K562 (cell line): ENCODE measurements at regions of chr6 and their contacts with region 1.

Region 1: DNA sequence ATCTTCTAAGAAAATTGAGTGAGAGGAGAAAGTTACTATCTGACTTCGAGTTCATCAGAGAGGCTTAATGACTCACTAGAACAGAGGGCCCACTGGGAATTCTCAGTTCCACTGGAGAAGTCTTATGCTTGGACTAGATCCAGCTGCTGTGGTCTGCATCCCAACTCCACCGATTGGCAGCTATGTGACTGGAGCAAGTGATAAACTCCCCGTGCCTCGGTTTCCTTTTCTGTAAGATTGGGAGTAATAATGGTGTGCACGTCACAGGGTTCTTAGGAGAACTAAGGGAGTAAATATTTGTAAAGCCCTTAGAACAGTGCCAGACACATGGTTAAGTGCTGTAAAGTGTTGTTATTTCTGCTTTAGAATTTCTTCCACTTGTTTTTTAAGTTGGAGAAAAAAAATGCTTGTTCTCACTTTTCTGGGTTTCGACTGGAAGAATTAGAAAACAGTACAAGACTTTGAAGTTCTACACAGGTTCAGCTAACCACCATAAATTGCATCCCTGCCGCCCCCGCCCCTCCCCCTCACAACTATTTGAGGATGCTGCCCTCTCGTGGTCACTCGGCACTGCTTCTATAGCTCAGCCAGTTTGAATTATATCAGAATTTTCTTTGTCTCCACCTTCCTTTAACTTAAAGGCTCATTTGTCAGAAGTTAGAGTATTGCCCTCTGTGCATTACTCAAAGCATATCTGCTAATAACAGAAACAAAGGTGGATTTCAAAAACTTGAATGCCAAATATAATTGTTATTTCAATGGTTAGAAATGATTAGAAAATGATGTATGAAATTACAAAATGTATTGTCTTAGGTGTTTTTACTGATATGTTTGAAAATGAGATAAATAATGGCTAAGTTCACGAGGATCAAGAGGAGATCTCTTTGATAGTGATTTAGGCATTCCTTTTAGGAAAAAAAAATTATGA is 95.0 kb upstream of the IFNGR1 start:
- DNase-seq: peak; percentile 73 to 82 (median 80)
- ATAC-seq: peak; percentile 98
- H3K4me3 ChIP-seq: no peak overlapping the region
- H3K27ac ChIP-seq: no peak overlapping the region
- H3K4me1 ChIP-seq: 0 out of 5 replicates have a peak, but pooled peaks cover 0 to 6% of the 10 kb centered on the region in 2 experiments
- H3K27me3 ChIP-seq: peaks cover 0 to 4% of the 10 kb centered on the region in 2 experiments; a peak in 1 of 5 replicates
- CTCF ChIP-seq: peak; percentile 85 to 95 (median 89)
- EP300 ChIP-seq: no peak
- POLR2A ChIP-seq: no peak
- RAD21 ChIP-seq: peak; percentile 95 to 98

Region 2: DNA sequence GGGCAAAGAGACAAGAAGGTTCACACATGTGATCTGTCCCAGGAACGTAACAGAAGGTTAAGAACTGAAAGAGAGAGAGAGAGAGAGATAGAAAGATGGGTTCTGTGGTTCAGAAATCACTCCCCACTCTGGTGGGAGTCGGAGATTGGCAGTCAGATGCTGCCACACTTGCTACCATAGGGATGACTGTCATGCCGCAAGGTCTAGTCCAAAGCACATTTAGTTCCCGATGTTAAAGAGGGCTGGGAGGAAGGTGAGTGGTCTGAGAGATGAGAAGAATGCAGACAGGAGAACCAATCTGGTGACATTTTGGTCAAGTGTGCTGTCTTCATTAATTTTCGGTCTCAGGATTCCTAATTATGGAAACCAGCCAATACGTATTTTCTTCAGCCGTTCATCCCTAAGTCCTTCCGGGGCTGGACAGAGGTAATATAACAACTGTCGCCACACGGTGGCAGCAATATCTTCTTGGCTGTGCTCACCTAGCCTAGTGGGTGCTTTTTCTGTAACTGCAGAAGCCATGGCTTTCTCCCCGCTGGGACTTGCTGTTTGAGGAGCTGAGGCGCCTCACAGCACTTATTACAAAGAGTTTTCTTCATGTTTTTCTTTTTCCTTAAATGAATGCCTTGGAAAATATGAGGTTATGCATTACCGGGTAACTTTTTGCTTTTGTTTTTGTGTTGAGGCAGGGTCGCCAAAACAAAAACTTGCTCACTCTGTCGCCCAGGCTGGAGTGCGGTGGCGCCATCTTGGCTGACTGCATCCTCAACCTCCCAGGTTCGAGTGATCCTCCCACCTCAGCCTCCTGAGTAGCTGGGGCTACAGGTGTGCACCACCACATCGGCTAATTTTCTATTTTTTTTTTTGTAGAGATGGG is 346.1 kb before region 1 on chr6:
- CTCF ChIA-PET with region 1: no interaction called
- POLR2A ChIA-PET with region 1: no interaction called
- in situ Hi-C with region 1: no loop called
- intact Hi-C with region 1: loop called (anchors 5 kb)
- DNase-seq: peak; percentile 83 to 86 (median 84)
- ATAC-seq: peak; percentile 99
- H3K4me3 ChIP-seq: no peak overlapping the region
- H3K27ac ChIP-seq: no peak overlapping the region
- H3K4me1 ChIP-seq: no peaks in the 10 kb centered on the region; a peak in 2 of 5 replicates
- H3K27me3 ChIP-seq: peaks cover 5 to 21% of the 10 kb centered on the region in 2 experiments; a peak in 4 of 5 replicates
- CTCF ChIP-seq: peak; percentile 84 to 86 (median 85)
- EP300 ChIP-seq: no peak
- POLR2A ChIP-seq: no peak
- RAD21 ChIP-seq: peak; percentile 68 to 80

Region 3: DNA sequence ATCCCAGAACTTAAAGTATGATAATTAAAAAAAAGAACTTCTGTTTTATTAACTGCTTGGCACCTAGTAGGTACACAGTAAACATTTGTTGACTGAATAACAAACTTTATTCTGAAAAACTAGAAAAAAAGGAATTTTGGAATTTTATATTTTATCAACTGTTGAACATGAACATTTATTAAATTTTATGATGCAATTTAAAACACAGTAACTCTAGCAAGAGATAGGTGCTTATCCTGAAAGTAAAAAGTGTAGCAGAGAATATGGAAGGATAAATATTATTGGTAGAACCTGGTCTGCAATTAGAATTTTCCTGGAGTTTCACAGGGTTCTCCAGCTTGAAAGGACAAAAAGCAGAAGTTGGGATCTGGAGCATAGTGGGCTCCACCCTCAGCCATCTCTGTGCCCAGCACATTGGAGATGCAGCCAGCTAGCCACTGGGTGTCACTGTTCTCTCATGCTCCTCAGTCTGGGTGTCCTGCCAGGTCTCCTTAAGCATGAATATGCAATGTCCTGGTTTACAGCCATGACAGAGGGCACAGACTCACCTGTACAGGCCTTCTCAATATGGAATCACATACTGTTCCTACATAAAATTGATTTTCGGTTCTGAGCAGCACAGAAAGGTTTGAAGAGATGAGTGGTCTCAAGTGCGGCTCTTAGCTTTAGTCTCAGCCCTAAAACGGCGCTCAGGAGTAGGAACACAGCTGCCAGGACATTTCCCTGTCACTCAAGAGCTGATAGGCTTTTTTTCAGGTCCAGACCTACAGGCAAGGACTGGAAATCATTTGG is 237.7 kb before region 1 on chr6:
- CTCF ChIA-PET with region 1: interaction called, 6 read pairs
- POLR2A ChIA-PET with region 1: no interaction called
- in situ Hi-C with region 1: no loop called
- intact Hi-C with region 1: loop called (anchors 1 kb)
- DNase-seq: peak; percentile 49 to 82 (median 58)
- ATAC-seq: peak; percentile 100
- H3K4me3 ChIP-seq: no peak overlapping the region
- H3K27ac ChIP-seq: no peak overlapping the region
- H3K4me1 ChIP-seq: no peaks in the 10 kb centered on the region
- H3K27me3 ChIP-seq: 0 out of 5 replicates have a peak, but pooled peaks cover 4% of the 10 kb centered on the region in 2 experiments
- CTCF ChIP-seq: peak; percentile 91 to 96 (median 94)
- EP300 ChIP-seq: no peak
- POLR2A ChIP-seq: no peak
- RAD21 ChIP-seq: peak; percentile 96 to 98

Region 4: DNA sequence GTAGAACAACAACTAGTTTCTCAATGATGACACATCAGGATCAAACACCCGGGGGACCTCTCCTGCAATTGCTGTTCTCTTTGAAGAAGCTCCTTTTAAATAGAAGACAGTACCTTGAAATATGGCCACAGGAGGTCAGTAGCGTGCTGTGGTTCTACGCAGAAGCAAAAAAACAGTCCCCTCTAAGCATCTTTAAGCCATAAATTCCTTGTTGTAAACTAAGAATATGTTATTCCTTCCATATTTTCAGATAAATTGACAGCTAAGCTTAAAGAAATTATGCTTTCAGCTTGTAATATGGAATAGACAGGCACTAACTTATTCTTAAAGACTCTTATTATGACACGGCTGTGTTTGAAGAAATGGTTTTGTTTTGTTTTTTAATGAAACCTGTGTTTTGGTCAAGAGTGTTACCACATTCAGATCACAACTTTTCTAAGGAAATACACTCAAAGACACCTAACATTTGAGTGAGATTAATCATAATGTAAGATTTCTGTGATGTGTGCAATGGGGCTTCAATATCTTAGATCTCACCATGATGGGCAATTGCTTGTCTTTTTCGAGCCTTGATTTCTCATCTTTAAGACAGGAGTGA is 219.7 kb before region 1 on chr6:
- CTCF ChIA-PET with region 1: interaction called, 23 read pairs
- POLR2A ChIA-PET with region 1: no interaction called
- in situ Hi-C with region 1: loop called (anchors 5 kb)
- intact Hi-C with region 1: loop called (anchors 1 kb)
- DNase-seq: peak; percentile 50 to 76 (median 64)
- ATAC-seq: peak; percentile 90
- H3K4me3 ChIP-seq: no peak overlapping the region
- H3K27ac ChIP-seq: no peak overlapping the region
- H3K4me1 ChIP-seq: no peaks in the 10 kb centered on the region
- H3K27me3 ChIP-seq: peaks cover 0 to 8% of the 10 kb centered on the region in 2 experiments; a peak in 1 of 5 replicates
- CTCF ChIP-seq: peak; percentile 68 to 91 (median 72)
- EP300 ChIP-seq: no peak
- POLR2A ChIP-seq: no peak
- RAD21 ChIP-seq: peak; percentile 97 to 98

Region 5: GRCh38 chr6:137155830-137156229 is 158.4 kb before region 1 on chr6:
- CTCF ChIA-PET with region 1: no interaction called
- POLR2A ChIA-PET with region 1: no interaction called
- in situ Hi-C with region 1: no loop called
- intact Hi-C with region 1: loop called (anchors 2 kb)
- DNase-seq: peak in 1 of 4 experiments; percentile 31
- ATAC-seq: no peak
- H3K4me3 ChIP-seq: no peak overlapping the region
- H3K27ac ChIP-seq: no peak overlapping the region
- H3K4me1 ChIP-seq: peaks cover 0 to 15% of the 10 kb centered on the region in 2 experiments; a peak in 3 of 5 replicates
- H3K27me3 ChIP-seq: no peaks in the 10 kb centered on the region
- CTCF ChIP-seq: no peak
- EP300 ChIP-seq: no peak; the same call in 1 of the 2 replicates
- POLR2A ChIP-seq: no peak
- RAD21 ChIP-seq: peak; percentile 45 to 52; a peak in 3 of 4 replicates

Region 6: GRCh38 chr6:137165375-137166246 is 148.6 kb before region 1 on chr6:
- CTCF ChIA-PET with region 1: no interaction called
- POLR2A ChIA-PET with region 1: interaction called, 3 read pairs
- in situ Hi-C with region 1: no loop called
- intact Hi-C with region 1: loop called (anchors 1 kb)
- DNase-seq: peak in 3 of 4 experiments; percentile 28 to 76 (median 45)
- ATAC-seq: peak; percentile 78
- H3K4me3 ChIP-seq: no peak overlapping the region
- H3K27ac ChIP-seq: no peak overlapping the region
- H3K4me1 ChIP-seq: peaks cover 0 to 34% of the 10 kb centered on the region in 2 experiments; a peak in 4 of 5 replicates
- H3K27me3 ChIP-seq: no peaks in the 10 kb centered on the region
- CTCF ChIP-seq: peak; percentile 71 to 75 (median 73)
- EP300 ChIP-seq: no peak
- POLR2A ChIP-seq: no peak
- RAD21 ChIP-seq: peak; percentile 82 to 88; a peak in 3 of 4 replicates

Region 7: GRCh38 chr6:137641474-137642077 is 327.4 kb after region 1 on chr6:
- CTCF ChIA-PET with region 1: interaction called, 3 read pairs
- POLR2A ChIA-PET with region 1: no interaction called
- in situ Hi-C with region 1: no loop called
- intact Hi-C with region 1: loop called (anchors 2 kb)
- DNase-seq: peak; percentile 45 to 76 (median 58)
- ATAC-seq: peak; percentile 98
- H3K4me3 ChIP-seq: no peak overlapping the region
- H3K27ac ChIP-seq: no peak overlapping the region
- H3K4me1 ChIP-seq: no peaks in the 10 kb centered on the region
- H3K27me3 ChIP-seq: peaks cover 9 to 10% of the 10 kb centered on the region in 2 experiments; a peak in 3 of 5 replicates
- CTCF ChIP-seq: peak; percentile 71 to 82 (median 75)
- EP300 ChIP-seq: no peak
- POLR2A ChIP-seq: no peak
- RAD21 ChIP-seq: peak; percentile 90 to 95